CD8-positive, alpha-beta memory T cell (primary cell): ENCODE measurements at regions of chr2 and their contacts with region 1.

Region 1: GRCh38 chr2:84314901-84315330 is 144.2 kb downstream of the SUCLG1 start:
- DNase-seq: peak; percentile 34 to 70 (median 54)
- H3K4me3 ChIP-seq: no peak overlapping the region
- H3K4me3 Mint-ChIP-seq: no peak overlapping the region
- H3K27ac ChIP-seq: no peak overlapping the region
- H3K27ac Mint-ChIP-seq: no peak overlapping the region
- H3K4me1 ChIP-seq: no peaks in the 10 kb centered on the region
- H3K4me1 Mint-ChIP-seq: peaks cover 3 to 5% (median 4%) of the 10 kb centered on the region in 3 donors
- H3K27me3 ChIP-seq: no peaks in the 10 kb centered on the region
- H3K27me3 Mint-ChIP-seq: peaks cover 11 to 41% of the 10 kb centered on the region in 2 donors

Region 2: DNA sequence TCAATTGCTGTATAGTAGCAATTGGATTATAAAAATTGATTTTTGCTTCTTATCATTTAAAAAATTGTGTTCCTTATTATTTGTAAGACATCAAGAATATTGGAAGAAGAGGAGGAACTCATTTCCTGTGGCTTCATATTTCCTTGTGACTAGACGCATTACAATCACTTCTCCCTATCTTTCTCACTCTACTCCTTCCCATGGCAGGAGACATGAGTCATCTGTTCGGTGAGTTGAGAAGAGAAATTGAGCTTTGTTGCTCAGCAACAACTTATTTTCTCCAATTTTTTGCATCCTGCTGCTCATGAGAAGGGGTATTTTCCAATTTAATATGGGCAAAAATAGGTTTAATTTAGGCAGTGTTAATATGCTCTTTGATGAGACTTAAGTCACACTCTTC is 1639.7 kb before region 1 on chr2:
- CTCF ChIA-PET with region 1: no interaction called
- POLR2A ChIA-PET with region 1: no interaction called
- DNase-seq: no peak
- H3K4me3 ChIP-seq: no peak overlapping the region
- H3K4me3 Mint-ChIP-seq: no peak overlapping the region
- H3K27ac ChIP-seq: no peak overlapping the region
- H3K27ac Mint-ChIP-seq: no peak overlapping the region
- H3K4me1 ChIP-seq: no peaks in the 10 kb centered on the region
- H3K4me1 Mint-ChIP-seq: no peaks in the 10 kb centered on the region
- H3K27me3 ChIP-seq: no peaks in the 10 kb centered on the region
- H3K27me3 Mint-ChIP-seq: no peaks in the 10 kb centered on the region

Region 3: DNA sequence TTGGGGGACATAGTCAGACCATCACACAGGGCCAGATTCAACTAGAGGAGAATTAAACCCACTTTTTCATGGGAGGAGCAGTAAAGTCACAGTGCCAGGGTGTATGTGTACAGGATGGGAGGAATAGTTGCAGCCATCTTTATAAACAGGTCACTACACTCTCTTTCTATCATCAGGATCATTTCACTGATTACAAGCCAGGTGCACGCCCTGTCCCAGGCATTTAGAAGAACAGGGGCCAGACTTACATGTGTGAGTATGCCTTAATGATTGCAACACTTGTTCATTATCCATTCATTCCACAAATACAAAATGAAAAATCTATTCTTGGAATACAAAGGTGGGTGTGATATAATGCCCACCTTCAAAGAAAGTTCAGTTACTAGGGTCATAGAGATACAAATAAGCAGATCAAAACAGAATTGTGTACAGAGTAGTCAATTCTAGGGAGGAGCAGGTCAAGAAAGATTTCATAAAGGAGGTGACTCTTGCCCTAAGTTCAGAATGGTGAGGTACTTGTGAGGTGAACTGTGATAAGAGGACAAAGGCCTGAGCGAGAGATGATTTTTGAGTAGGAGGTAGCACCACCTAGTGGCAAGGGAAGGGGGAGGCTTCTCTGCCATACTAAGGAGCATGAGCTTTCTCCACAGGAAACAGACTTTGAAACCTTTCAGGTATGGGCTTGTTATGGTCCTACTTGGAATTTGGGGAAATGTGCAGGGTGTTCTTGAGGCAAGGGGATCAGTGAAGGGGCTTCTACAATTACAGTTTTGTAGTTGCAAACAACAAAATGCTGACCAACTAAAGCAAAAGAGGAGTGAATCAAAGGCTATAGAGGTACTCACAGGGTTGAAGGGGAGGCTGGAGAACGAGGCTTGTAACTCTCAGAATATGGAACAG is 12.2 kb before region 1 on chr2:
- CTCF ChIA-PET with region 1: interaction called, 24 read pairs
- POLR2A ChIA-PET with region 1: no interaction called
- DNase-seq: peak in 4 of 5 donors; percentile 2 to 15 (median 15)
- H3K4me3 ChIP-seq: no peak overlapping the region
- H3K4me3 Mint-ChIP-seq: no peak overlapping the region
- H3K27ac ChIP-seq: no peak overlapping the region
- H3K27ac Mint-ChIP-seq: no peak overlapping the region
- H3K4me1 ChIP-seq: no peaks in the 10 kb centered on the region
- H3K4me1 Mint-ChIP-seq: no peaks in the 10 kb centered on the region
- H3K27me3 ChIP-seq: no peaks in the 10 kb centered on the region
- H3K27me3 Mint-ChIP-seq: peaks cover 2 to 17% of the 10 kb centered on the region in 2 donors

Region 4: DNA sequence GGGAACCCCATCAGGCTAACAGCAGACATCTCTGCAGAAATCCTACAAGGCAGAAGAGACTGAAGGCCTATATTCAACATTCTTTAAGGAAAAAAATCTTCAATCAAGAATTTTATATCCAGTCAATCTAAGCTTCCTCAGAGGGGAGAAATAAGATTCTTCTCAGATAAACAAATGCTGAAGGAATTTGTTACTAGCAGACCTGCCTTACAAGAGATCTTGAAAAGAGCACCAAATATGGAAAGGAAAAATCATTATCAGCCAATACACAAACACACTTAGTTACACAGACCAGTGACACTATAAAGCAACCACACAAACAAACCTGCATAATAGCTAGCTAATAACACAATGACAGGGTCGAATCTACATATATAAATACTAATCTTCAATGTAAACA is 47.6 kb after region 1 on chr2:
- CTCF ChIA-PET with region 1: no interaction called
- POLR2A ChIA-PET with region 1: no interaction called
- DNase-seq: no peak
- H3K4me3 ChIP-seq: no peak overlapping the region
- H3K4me3 Mint-ChIP-seq: no peak overlapping the region
- H3K27ac ChIP-seq: no peak overlapping the region
- H3K27ac Mint-ChIP-seq: no peak overlapping the region
- H3K4me1 ChIP-seq: no peaks in the 10 kb centered on the region
- H3K4me1 Mint-ChIP-seq: no peaks in the 10 kb centered on the region
- H3K27me3 ChIP-seq: no peaks in the 10 kb centered on the region
- H3K27me3 Mint-ChIP-seq: peaks cover 23 to 52% of the 10 kb centered on the region in 2 donors